Dendritic cell treated with granulocyte-macrophage colony-stimulating factor and Interleukin-4, amounts not matched to agents 40 ng/mL and 50 ng/mL, for 4 days (primary cell): ENCODE measurements at regions of chr10 and their contacts with region 1.

Region 1: GRCh38 chr10:80444646-80445319 is 9.3 kb upstream of the TSPAN14 start:
- H3K4me3 Mint-ChIP-seq: no peak overlapping the region
- H3K27ac Mint-ChIP-seq: peak overlapping the region; percentile 34
- H3K4me1 Mint-ChIP-seq: peaks cover 50% of the 10 kb centered on the region
- H3K27me3 Mint-ChIP-seq: peaks cover 1% of the 10 kb centered on the region

Region 2: DNA sequence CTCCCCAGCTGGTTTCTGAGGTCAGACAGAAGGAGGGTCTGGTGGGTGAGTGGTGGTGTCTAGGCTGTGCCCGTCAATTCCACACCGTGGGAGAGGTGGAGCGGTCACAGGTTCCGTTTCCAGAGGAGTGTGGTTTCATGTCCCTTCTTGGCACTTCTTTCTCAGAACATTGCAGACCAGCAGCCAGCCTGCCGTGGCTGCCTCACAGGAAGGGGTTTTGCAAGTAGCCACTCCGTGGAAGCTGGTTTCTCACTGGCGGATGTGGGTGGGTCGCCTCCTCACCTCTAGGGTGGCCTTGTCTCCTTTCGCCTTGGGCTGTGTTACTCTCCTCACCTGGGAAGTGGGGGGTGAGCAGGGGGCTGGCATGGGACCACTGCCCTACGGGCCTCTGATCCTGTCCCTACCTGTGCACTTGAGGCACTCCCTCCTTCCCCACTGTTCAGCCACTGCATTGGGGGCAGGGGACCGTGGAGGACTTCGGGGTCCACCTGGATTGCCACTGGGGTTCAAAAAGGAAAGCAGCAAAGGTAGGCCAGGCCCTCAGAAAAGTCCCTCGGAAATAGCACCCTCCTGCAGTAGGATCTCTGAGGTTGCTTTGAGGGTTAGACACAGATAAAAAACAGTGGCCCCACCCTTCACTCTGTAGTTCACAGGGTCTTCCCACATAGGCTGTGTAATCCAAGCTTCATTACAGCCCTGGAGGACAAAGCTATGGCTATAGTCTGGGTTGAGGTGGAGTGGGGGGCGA is 43.2 kb after region 1 on chr10:
- intact Hi-C with region 1: no loop called
- H3K4me3 Mint-ChIP-seq: peak overlapping the region; percentile 36
- H3K27ac Mint-ChIP-seq: peak overlapping the region; percentile 88
- H3K4me1 Mint-ChIP-seq: peaks cover 86% of the 10 kb centered on the region
- H3K27me3 Mint-ChIP-seq: no peaks in the 10 kb centered on the region

Region 3: DNA sequence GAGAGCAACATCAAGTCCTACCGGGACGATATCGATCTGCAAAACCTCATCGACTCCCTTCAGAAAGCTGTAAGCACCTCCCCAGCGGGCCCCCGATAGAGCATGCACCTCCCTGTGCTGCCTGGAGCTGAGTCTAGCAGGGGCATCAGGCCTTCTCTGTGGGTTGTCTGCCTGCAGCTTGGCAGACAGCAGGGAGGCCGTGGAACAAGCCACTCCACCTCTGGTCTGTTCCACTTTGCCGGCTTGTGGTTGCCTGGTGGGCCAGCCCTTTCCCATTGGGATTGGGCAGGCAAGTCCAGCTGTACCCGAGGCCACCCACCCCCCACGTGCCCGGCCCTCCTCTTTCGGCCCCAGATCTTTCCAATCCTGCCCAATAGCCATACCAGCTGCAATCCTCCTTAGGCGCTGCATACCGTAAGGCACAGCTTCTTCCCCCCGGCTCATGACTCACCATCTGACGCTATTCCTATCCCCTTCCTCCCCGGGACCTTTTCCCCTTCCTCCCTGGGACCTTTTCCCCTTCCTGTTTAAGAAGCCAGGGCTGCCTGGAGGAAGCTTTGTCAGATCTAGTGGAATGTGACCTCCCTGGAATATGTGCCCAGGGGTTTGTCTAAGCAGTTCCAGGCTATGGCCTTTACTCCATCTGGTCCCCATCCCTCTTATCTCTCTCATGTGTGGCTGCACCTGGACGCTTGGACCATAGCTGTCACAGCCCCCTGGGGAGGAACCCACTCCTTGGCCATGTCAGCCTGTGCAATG is 64.8 kb after region 1 on chr10:
- intact Hi-C with region 1: loop called (anchors 1 kb)
- H3K4me3 Mint-ChIP-seq: no peak overlapping the region
- H3K27ac Mint-ChIP-seq: peak overlapping the region; percentile 36
- H3K4me1 Mint-ChIP-seq: peaks cover 43% of the 10 kb centered on the region
- H3K27me3 Mint-ChIP-seq: no peaks in the 10 kb centered on the region

Region 4: GRCh38 chr10:80599424-80599847 is 154.7 kb after region 1 on chr10:
- intact Hi-C with region 1: loop called (anchors 5 kb)
- H3K4me3 Mint-ChIP-seq: no peak overlapping the region
- H3K27ac Mint-ChIP-seq: peak overlapping the region; percentile 75
- H3K4me1 Mint-ChIP-seq: peaks cover 41% of the 10 kb centered on the region
- H3K27me3 Mint-ChIP-seq: peaks cover 2% of the 10 kb centered on the region

Region 5: GRCh38 chr10:80769700-80770160 is 324.9 kb after region 1 on chr10:
- intact Hi-C with region 1: no loop called
- H3K4me3 Mint-ChIP-seq: no peak overlapping the region
- H3K27ac Mint-ChIP-seq: no peak overlapping the region
- H3K4me1 Mint-ChIP-seq: no peaks in the 10 kb centered on the region
- H3K27me3 Mint-ChIP-seq: peaks cover 3% of the 10 kb centered on the region